CD4-positive, alpha-beta memory T cell (primary cell): ENCODE measurements at regions of chr9 and their contacts with region 1.

Region 1: DNA sequence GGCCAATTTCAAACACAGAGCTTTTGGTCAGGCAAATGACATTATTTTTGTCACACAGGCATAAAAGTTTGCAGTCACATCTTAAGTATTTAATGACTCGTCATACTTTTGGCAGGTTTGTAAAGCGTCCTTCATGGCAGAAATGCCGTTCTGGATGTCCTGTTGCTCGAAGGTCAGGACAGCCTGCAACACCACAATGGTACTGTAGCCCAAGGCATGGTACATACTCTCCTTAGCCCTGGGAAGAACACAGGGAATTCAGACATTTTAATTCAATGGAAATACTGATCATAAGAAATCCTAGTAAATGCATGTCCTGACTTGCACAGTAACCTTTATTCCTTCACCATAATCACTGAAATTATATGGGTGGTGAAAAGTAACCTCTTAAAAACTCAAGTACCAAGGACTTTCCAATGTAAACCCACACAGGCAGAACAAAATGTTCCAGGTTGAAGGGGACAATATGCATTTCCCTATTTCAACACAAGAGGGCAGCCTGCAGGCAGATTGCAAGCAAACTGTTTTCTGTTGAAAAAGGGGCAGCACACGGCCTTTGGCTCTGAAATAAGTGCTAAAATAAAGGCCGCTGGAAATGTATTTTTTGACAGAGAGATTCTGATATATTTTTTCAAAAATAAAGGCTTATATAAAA is 95.7 kb downstream of the TTC39B start:
- DNase-seq: peak; percentile 46 to 63 (median 59)
- H3K4me3 ChIP-seq: no peak overlapping the region
- H3K4me3 Mint-ChIP-seq: no peak overlapping the region
- H3K27ac ChIP-seq: no peak overlapping the region
- H3K27ac Mint-ChIP-seq: peak overlapping the region in 1 of 7 donors; percentile 48
- H3K4me1 ChIP-seq: no peaks in the 10 kb centered on the region
- H3K4me1 Mint-ChIP-seq: peaks cover 4 to 10% (median 5%) of the 10 kb centered on the region in 4 donors
- H3K27me3 ChIP-seq: no peaks in the 10 kb centered on the region
- H3K27me3 Mint-ChIP-seq: no peaks in the 10 kb centered on the region

Region 2: GRCh38 chr9:15032860-15033259 is 178.4 kb before region 1 on chr9:
- CTCF ChIA-PET with region 1: no interaction called
- POLR2A ChIA-PET with region 1: no interaction called
- intact Hi-C with region 1: no loop called
- DNase-seq: no peak
- H3K4me3 ChIP-seq: no peak overlapping the region
- H3K4me3 Mint-ChIP-seq: no peak overlapping the region
- H3K27ac ChIP-seq: no peak overlapping the region
- H3K27ac Mint-ChIP-seq: no peak overlapping the region
- H3K4me1 ChIP-seq: no peaks in the 10 kb centered on the region
- H3K4me1 Mint-ChIP-seq: no peaks in the 10 kb centered on the region
- H3K27me3 ChIP-seq: no peaks in the 10 kb centered on the region
- H3K27me3 Mint-ChIP-seq: peaks cover 2% of the 10 kb centered on the region in 2 donors

Region 3: DNA sequence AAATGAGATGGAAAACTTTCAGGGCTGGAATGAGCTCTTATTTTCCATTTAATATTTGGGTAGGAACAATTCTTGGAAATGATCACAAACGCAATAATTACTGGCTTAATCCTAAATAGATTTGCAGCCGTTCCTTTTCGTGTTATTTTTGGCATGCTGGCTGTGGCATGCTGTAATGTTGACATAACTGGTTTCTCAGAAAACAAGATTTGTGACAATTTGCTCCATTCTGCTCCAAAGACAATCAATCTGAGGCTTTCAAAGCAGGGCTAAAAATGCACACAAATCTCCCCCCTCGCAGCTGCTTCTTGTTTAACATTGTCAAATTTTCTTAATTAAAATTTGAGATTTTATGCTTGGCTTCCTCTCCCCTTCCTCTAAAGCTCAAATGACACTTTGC is 55.5 kb before region 1 on chr9:
- CTCF ChIA-PET with region 1: no interaction called
- POLR2A ChIA-PET with region 1: no interaction called
- intact Hi-C with region 1: no loop called
- DNase-seq: no peak
- H3K4me3 ChIP-seq: no peak overlapping the region
- H3K4me3 Mint-ChIP-seq: no peak overlapping the region
- H3K27ac ChIP-seq: no peak overlapping the region
- H3K27ac Mint-ChIP-seq: no peak overlapping the region
- H3K4me1 ChIP-seq: no peaks in the 10 kb centered on the region
- H3K4me1 Mint-ChIP-seq: peaks cover 0 to 2% (median 0%) of the 10 kb centered on the region in 4 donors
- H3K27me3 ChIP-seq: no peaks in the 10 kb centered on the region
- H3K27me3 Mint-ChIP-seq: peaks cover 8% of the 10 kb centered on the region in 2 donors

Region 4: DNA sequence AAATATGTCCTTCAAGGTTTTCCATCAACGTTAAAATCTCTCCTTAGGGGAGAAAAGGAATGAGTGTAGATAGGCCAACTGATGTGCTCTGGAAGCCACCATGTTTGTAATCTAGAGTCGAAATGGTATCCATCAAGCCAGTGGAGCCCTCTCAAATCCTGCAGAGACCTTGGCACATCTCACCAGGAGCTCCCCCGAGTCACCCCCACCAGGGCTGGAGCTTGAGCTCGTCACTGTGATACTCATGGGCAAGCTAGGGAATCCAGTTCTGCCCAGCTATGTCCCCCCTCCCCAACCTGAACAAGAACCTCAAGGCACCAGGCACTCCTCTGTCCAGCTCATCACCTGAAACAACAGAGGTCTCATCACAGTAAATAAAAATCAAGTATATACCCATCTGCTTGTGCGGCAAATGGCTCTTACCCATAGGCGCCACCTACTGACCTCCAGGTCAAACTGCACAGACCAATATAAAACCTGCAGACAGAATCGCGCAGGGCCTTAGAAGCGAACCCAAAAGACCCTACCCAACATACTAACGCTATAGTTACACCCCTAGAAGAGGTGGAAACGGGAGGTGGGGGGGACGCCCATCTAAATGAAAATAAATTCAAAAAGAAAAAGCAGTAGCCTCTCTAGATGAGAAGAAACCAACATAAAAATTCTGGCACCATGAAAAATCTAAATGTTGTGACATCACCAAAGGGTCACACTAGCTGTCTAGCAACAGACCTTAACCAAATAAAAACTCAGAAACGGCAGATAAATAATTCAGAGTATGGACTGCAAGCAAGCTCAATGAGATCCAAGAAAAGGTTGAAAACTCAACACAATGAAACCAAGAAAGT is 20.7 kb after region 1 on chr9:
- CTCF ChIA-PET with region 1: interaction called, 11 read pairs
- POLR2A ChIA-PET with region 1: no interaction called
- intact Hi-C with region 1: no loop called
- DNase-seq: peak in 1 of 5 donors; percentile 9
- H3K4me3 ChIP-seq: no peak overlapping the region
- H3K4me3 Mint-ChIP-seq: peak overlapping the region in 3 of 8 donors; percentile 13 to 55 (median 36)
- H3K27ac ChIP-seq: no peak overlapping the region
- H3K27ac Mint-ChIP-seq: peak overlapping the region in 2 of 7 donors; percentile 13 to 27
- H3K4me1 ChIP-seq: peaks cover 11% of the 10 kb centered on the region
- H3K4me1 Mint-ChIP-seq: peaks cover 17 to 37% (median 29%) of the 10 kb centered on the region in 4 donors
- H3K27me3 ChIP-seq: no peaks in the 10 kb centered on the region
- H3K27me3 Mint-ChIP-seq: no peaks in the 10 kb centered on the region

Region 5: GRCh38 chr9:15262581-15262980 is 51.3 kb after region 1 on chr9:
- CTCF ChIA-PET with region 1: no interaction called
- POLR2A ChIA-PET with region 1: no interaction called
- intact Hi-C with region 1: no loop called
- DNase-seq: no peak
- H3K4me3 ChIP-seq: no peak overlapping the region
- H3K4me3 Mint-ChIP-seq: no peak overlapping the region
- H3K27ac ChIP-seq: no peak overlapping the region
- H3K27ac Mint-ChIP-seq: peak overlapping the region in 3 of 7 donors; percentile 68 to 74 (median 74)
- H3K4me1 ChIP-seq: no peaks in the 10 kb centered on the region
- H3K4me1 Mint-ChIP-seq: peaks cover 0 to 25% (median 11%) of the 10 kb centered on the region in 4 donors
- H3K27me3 ChIP-seq: no peaks in the 10 kb centered on the region
- H3K27me3 Mint-ChIP-seq: no peaks in the 10 kb centered on the region

Region 6: DNA sequence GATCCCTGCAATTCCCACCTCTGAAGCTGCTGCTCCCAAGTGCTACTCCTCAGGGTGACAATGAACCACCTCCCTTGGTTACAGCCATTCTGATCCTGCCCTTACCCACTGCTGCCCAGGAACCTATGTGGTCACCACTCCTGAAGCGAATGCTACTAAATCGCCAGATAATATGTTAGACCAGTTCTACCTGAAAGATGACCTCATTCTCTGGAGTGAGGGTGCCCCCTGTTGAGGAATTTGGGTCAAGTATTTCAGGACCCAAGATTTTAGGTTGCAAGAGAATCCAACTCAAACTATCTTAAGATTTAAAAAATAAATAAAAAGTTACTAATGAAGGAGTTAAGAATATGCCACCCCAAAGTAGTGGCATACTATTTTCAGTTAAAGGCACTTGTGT is 205.6 kb after region 1 on chr9:
- CTCF ChIA-PET with region 1: interaction called, 18 read pairs
- POLR2A ChIA-PET with region 1: no interaction called
- intact Hi-C with region 1: loop called (anchors 1 kb)
- DNase-seq: peak; percentile 30 to 46 (median 40)
- H3K4me3 ChIP-seq: no peak overlapping the region
- H3K4me3 Mint-ChIP-seq: no peak overlapping the region
- H3K27ac ChIP-seq: no peak overlapping the region
- H3K27ac Mint-ChIP-seq: peak overlapping the region in 1 of 7 donors; percentile 9
- H3K4me1 ChIP-seq: peaks cover 1% of the 10 kb centered on the region
- H3K4me1 Mint-ChIP-seq: peaks cover 0 to 2% (median 1%) of the 10 kb centered on the region in 4 donors
- H3K27me3 ChIP-seq: no peaks in the 10 kb centered on the region
- H3K27me3 Mint-ChIP-seq: peaks cover 0 to 2% of the 10 kb centered on the region in 2 donors

Region 7: GRCh38 chr9:15529566-15530324 is 318.5 kb after region 1 on chr9:
- CTCF ChIA-PET with region 1: interaction called, 5 read pairs
- POLR2A ChIA-PET with region 1: no interaction called
- intact Hi-C with region 1: loop called (anchors 1 kb)
- DNase-seq: no peak
- H3K4me3 ChIP-seq: no peak overlapping the region
- H3K4me3 Mint-ChIP-seq: no peak overlapping the region
- H3K27ac ChIP-seq: no peak overlapping the region
- H3K27ac Mint-ChIP-seq: no peak overlapping the region
- H3K4me1 ChIP-seq: no peaks in the 10 kb centered on the region
- H3K4me1 Mint-ChIP-seq: peaks cover 0 to 6% (median 4%) of the 10 kb centered on the region in 4 donors
- H3K27me3 ChIP-seq: no peaks in the 10 kb centered on the region
- H3K27me3 Mint-ChIP-seq: no peaks in the 10 kb centered on the region